HEK293 (cell line): ENCODE measurements at regions of chr19 and their contacts with region 1.

Region 1: DNA sequence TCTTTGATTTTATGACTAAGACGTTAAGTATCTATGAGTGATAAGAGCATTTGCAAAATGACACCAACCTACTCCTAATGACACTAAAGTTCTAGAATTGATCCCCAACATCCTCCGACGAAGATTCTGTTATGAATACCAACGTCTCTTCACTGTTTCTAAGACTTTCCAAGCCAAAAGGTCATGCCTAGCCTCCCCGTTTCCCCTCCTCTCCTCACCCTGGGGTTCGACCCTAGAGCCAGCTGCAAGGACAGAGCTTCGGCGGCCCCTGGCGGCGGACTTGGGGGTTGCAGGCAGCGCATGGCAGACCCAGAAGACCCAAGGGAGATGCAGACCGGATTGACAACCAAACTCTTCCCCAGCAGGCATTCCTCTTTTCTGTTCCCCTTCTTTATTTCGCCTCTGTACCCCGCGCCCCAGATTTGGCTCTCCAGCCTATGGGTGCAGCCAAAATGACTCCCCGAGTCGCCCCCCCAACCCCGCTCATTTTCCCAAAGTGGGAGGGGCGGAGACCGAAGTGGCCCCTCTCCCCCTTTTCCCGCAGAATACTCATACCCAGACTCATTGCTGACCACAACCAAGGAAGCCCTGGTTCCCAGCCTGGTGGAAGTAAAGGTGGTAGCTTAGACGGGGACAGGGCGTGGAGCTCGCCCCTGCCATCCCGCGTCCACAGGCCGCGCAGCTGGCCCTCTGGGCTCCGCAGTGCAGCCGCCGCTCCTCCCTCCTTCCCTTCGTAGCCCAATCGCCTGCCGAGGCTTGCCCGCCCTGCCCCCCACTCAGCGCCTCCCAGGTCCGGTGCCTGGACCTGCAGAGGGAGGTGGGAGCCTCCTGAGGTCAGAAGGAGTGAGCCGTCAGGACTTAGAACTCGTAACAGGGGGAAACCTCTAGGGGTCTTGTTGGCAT is 4.1 kb upstream of the EML2 start:
- H3K4me3 ChIP-seq: no peak overlapping the region
- H3K27ac ChIP-seq: no peak overlapping the region
- H3K4me1 ChIP-seq: peaks cover 12% of the 10 kb centered on the region
- CTCF ChIP-seq: peak; percentile 95

Region 2: DNA sequence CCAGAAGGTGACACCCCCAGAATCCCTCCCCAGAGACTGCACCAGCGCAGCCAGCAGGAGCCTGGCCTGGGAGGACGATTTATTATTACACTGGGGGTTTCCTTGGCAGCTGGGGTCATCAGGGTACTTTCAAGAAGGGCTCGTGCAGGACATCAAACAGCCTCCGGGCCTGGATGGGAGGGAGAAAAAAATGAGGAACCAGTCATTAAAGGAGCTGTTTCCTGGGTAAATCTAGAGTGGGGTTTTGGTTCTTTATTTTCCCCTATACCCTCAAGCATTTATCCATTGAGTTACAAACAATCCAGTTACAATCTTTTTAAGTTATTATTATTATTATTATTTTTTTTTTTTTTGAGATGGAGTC is 233.7 kb before region 1 on chr19:
- CTCF ChIA-PET with region 1: no interaction called
- POLR2A ChIA-PET with region 1: no interaction called
- H3K4me3 ChIP-seq: no peak overlapping the region
- H3K27ac ChIP-seq: no peak overlapping the region
- H3K4me1 ChIP-seq: 0 out of 2 replicates have a peak, but pooled peaks cover 4% of the 10 kb centered on the region
- CTCF ChIP-seq: no peak

Region 3: DNA sequence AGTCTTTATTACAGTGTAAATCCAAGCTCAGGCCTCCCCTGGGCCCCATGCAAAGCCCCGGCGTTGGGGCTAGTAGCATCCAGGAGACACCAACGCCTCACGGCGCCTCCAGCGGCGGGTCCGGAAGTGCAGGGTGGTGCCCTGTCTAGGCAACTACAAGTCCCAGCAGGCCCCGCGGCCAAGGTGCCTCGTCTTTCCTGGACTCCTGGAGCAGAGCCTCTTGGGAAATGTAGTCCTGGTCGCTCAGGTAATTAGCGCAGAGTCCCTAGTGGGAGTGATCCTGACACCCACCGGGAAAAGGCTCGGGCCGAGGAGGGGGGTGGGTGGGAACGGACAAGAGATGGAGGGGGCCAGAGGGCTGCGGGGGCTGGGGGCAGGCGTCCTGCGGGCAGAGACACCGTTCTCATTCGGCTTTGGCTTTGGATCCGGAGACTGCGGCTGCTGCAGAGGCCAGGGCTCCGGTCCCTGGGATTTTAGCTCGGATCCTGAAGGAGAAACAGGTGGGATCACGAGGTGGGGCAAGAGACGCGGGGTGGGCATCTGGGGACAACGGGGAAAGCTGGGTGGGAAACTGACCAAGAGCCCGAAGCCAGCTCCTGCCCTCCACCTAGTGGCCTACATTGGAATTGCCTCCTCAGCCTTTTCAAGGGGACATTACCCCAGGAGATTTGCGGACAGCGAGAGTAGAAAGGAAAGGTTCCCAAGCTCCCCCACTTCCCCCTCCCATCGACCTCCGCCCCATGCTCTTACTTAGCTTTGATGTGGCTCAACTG is 157.8 kb before region 1 on chr19:
- CTCF ChIA-PET with region 1: interaction called, 41 read pairs
- POLR2A ChIA-PET with region 1: interaction called, 5 read pairs
- H3K4me3 ChIP-seq: peak overlapping the region; percentile 53
- H3K27ac ChIP-seq: peak overlapping the region; percentile 53; the same call in 1 of the 2 replicates
- H3K4me1 ChIP-seq: peaks cover 2% of the 10 kb centered on the region; the same call in 1 of the 2 replicates
- CTCF ChIP-seq: peak; percentile 89

Region 4: GRCh38 chr19:45558399-45558878 is 84.8 kb before region 1 on chr19:
- CTCF ChIA-PET with region 1: interaction called, 23 read pairs
- POLR2A ChIA-PET with region 1: no interaction called
- H3K4me3 ChIP-seq: no peak overlapping the region
- H3K27ac ChIP-seq: no peak overlapping the region
- H3K4me1 ChIP-seq: no peaks in the 10 kb centered on the region
- CTCF ChIP-seq: peak; percentile 92

Region 5: DNA sequence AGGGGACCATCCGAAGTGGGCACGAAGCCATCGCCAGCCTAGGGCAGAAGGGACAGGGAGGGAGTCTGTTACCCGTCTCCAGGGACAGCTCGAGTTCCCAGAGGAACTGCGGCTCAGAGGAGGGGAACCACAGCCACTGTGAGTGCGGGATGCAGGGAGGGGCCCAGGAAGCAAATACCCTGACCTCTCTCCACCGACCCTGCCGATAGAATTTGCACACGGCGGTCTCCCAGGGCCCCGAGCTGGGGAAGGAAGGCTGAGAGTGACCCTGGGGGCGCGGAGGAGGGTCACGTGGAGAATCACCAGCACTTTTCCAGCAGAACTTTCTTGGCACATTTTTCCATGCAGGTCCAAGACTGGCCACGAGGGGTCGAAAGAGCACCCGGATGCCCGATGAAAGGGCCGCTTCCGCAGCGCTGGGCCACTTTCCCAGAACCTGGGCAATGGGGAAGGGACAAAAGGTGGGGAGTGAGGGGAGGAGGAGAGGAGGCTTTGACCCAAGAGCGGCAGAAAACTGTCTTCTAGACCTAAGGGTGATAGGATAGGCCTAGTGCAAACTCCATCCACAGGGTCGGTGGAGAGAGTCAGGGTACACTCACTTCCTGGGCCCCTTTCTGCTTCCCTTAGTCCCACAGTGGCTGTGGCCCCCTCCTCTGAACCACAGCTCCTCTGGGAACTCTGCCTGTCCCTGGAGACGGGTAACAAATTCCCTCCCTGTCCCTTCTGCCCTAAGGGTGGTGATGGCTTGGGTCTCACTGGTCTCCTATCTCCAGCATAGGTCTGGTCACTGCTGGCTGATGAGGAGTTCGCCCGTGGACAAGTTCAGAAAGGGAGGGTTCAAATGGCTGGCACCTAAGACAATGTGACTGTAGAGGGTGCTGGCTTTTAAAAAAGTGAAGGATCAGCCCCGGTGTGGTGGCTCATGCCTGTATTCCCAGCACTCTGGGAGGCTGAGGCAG is 35.9 kb before region 1 on chr19:
- CTCF ChIA-PET with region 1: interaction called, 155 read pairs
- POLR2A ChIA-PET with region 1: interaction called, 6 read pairs
- H3K4me3 ChIP-seq: 0 out of 2 replicates have a peak overlapping the region, but pooled peaks have one; percentile 6
- H3K27ac ChIP-seq: peak overlapping the region; percentile 29; the same call in 1 of the 2 replicates
- H3K4me1 ChIP-seq: no peaks in the 10 kb centered on the region; the same call in 1 of the 2 replicates
- CTCF ChIP-seq: peak; percentile 87

Region 6: GRCh38 chr19:45670670-45671453 is 27.6 kb after region 1 on chr19:
- CTCF ChIA-PET with region 1: interaction called, 24 read pairs
- POLR2A ChIA-PET with region 1: interaction called, 3 read pairs
- H3K4me3 ChIP-seq: no peak overlapping the region
- H3K27ac ChIP-seq: no peak overlapping the region
- H3K4me1 ChIP-seq: peaks cover 10% of the 10 kb centered on the region
- CTCF ChIP-seq: no peak